Naive thymus-derived CD8-positive, alpha-beta T cell (primary cell): ENCODE measurements at regions of chr5 and their contacts with region 1.

Region 1: GRCh38 chr5:50744776-50745175 is 78.3 kb downstream of the PARP8 start:
- DNase-seq: peak in 3 of 10 donors; percentile 37 to 44 (median 37)
- ATAC-seq: peak; percentile 55 to 61
- H3K4me3 Mint-ChIP-seq: peak overlapping the region; percentile 74 to 89 (median 83)
- H3K27ac Mint-ChIP-seq: peak overlapping the region; percentile 90 to 96 (median 92)
- H3K4me1 Mint-ChIP-seq: peaks cover 42 to 84% (median 77%) of the 10 kb centered on the region in 4 donors
- H3K27me3 Mint-ChIP-seq: no peaks in the 10 kb centered on the region

Region 2: GRCh38 chr5:50440651-50441492 is 303.9 kb before region 1 on chr5 and contains the start of gene EMB:
- POLR2A ChIA-PET with region 1: interaction called, 34 read pairs
- DNase-seq: peak; percentile 59 to 89 (median 81)
- ATAC-seq: peak; percentile 69 to 76
- H3K4me3 Mint-ChIP-seq: peak within 1 kb of the TSS; percentile 91 to 97 (median 96)
- H3K27ac Mint-ChIP-seq: peak within 1 kb of the TSS; percentile 95 to 100 (median 98)
- H3K4me1 Mint-ChIP-seq: peaks cover 28 to 82% (median 65%) of the 10 kb centered on the region in 4 donors
- H3K27me3 Mint-ChIP-seq: no peaks in the 10 kb centered on the region
- polyA plus RNA-seq, gene EMB: 109 to 184 (median 164) TPM

Region 3: GRCh38 chr5:50553560-50553984 is 191.2 kb before region 1 on chr5:
- POLR2A ChIA-PET with region 1: no interaction called
- DNase-seq: no peak
- ATAC-seq: no peak
- H3K4me3 Mint-ChIP-seq: peak overlapping the region in 4 of 10 donors; percentile 22 to 49 (median 35)
- H3K27ac Mint-ChIP-seq: peak overlapping the region in 7 of 10 donors; percentile 6 to 78 (median 49)
- H3K4me1 Mint-ChIP-seq: peaks cover 11 to 42% (median 27%) of the 10 kb centered on the region in 4 donors
- H3K27me3 Mint-ChIP-seq: no peaks in the 10 kb centered on the region

Region 4: DNA sequence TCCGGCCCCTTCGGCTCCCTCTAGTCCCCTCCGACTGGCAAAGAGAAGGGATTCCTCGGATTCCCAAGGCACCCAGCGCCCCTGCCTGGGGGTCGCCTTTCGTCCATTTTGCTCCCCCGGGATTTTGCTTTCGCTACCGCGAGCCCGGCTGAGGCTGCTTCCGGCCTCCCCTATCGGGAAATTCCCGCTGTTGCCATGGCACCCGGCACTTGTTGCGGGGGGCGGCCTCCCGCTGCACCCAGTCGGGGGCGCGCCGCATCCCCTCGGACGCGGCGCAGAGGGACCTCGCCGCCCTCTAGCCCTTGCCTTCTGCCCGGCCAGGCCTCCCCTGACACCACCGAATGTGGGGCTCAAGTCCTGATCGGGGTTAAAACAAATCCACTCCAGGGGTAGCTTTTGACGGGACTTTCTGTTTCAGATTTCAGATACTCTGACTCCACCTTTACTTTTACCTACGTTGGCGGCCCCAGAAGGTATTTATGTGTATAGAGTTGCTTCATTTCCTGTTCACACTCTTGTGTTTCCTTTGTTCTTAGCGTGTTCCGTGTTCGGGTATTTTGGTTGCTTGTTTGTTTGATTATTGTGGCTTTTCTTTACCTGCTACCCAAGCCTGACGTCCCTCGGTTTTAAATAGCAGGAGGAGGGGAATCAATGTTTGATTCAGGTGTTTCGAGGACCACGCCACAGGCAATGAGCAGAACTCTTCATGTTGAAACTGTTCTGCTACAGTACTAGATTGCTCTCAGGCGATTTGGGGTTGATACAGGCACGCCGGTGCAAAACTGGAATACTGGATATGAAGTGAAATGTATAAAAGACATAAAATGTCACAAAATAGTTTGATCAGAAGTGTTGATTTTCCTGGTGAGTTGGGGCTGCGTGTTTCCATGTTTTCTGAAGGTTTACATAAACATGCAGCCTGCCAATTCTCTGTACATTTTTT is 76.9 kb before region 1 on chr5:
- POLR2A ChIA-PET with region 1: interaction called, 26 read pairs
- DNase-seq: peak; percentile 82 to 94 (median 90)
- ATAC-seq: peak; percentile 60 to 76
- H3K4me3 Mint-ChIP-seq: peak overlapping the region; percentile 88 to 100 (median 95)
- H3K27ac Mint-ChIP-seq: peak overlapping the region; percentile 96 to 100 (median 98)
- H3K4me1 Mint-ChIP-seq: peaks cover 33 to 75% (median 64%) of the 10 kb centered on the region in 4 donors
- H3K27me3 Mint-ChIP-seq: peaks cover 0 to 1% (median 0%) of the 10 kb centered on the region in 5 donors

Region 5: DNA sequence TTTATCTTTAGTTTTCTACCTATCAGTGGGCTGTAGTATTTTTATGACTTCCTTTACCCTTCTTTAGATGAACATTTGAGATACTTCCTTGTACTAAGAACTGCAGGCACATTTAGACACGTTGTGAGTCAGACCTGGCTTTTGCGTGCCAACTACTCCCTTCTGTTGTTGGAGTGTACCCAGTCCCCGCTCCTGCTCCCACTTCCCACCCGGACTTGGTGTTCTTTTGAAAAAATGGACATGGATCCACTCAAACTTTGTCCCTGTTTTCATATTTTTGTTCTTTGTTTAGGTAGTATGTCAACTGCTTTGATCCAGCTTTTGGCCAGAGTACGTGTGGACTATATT is 17.7 kb before region 1 on chr5:
- POLR2A ChIA-PET with region 1: interaction called, 13 read pairs
- DNase-seq: no peak
- ATAC-seq: peak; percentile 76 to 81
- H3K4me3 Mint-ChIP-seq: peak overlapping the region; percentile 34 to 77 (median 56)
- H3K27ac Mint-ChIP-seq: peak overlapping the region; percentile 72 to 91 (median 84)
- H3K4me1 Mint-ChIP-seq: peaks cover 29 to 80% (median 60%) of the 10 kb centered on the region in 4 donors
- H3K27me3 Mint-ChIP-seq: no peaks in the 10 kb centered on the region